ENCODE measurements at regions of chr2 and their contacts with region 1.

Region 1: DNA sequence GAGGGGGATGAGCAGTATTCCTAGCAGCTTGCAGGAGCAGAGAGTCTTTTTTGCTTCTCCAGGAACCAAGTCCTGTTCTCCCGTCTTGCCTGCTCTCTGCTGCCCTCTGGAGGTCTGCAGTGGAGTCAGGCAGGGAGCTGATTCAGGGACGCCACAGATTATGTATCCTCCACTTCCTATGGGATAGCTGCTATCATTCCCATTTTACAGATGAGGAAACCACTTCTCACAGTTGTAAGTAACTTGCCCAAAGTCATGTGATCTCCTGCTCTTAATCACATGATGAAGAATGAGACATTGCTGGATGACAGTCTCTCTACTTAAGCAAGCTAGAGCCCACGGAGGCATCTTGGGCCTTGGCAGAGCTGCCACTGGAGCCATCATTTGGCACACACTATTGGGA is 8.3 kb downstream of the SLC4A5 start:
- DNase-seq: peak; percentile 70 to 82 (median 76)
- ATAC-seq: peak; percentile 59 to 86 (median 74)
- H3K4me3 ChIP-seq: no peak overlapping the region
- H3K27ac ChIP-seq: no peak overlapping the region
- H3K4me1 ChIP-seq: no peaks in the 10 kb centered on the region
- H3K27me3 ChIP-seq: no peaks in the 10 kb centered on the region
- CTCF ChIP-seq: peak; percentile 89 to 98 (median 95)
- POLR2A ChIP-seq: no peak

Region 2: DNA sequence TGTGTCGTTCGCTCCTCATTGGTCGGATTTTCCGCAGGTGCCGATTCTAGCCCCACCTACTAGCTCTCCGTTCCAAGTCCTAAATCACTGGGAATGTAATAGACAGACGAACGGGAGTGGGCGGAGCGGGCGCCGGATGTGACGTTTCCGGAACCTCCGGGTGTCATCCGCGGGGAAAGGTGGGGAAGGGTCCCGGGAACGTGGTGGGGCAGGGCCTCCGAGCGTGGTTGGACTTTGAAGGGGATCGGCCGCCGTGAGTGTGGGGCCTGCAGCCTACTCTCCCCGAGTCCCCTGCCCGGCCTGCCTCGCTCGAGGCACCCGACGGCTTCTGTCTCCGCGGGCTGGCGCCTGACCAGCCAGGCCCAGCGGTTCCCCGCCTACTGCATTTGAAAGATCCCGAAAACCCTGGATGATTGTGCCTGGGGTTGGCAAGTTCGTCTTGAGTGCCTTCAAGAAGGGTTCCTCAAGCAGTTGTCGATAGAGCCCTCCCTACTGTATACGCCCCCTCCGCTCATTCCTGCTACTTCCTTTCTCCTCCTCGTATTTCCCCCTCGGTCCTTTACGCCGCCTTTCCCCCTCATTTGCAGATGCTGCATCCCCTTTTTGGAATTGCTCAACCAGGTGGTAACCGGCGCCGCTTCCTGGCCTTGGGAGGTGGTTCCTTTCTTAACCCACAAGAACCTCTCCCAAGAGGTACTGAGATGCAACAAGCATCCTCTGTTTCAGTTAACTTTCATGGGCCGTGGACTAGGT is 505.9 kb before region 1 on chr2 and contains the start of gene STAMBP:
- intact Hi-C with region 1: loop called in 4 of 10 experiments (anchors 10 kb)
- DNase-seq: peak; percentile 97
- ATAC-seq: peak; percentile 98 to 99 (median 98)
- H3K4me3 ChIP-seq: peak within 1 kb of the TSS; percentile 68 to 97 (median 86)
- H3K27ac ChIP-seq: peak within 1 kb of the TSS; percentile 88 to 99 (median 95)
- H3K4me1 ChIP-seq: peaks cover 0 to 40% (median 17%) of the 10 kb centered on the region in 12 donors
- H3K27me3 ChIP-seq: no peaks in the 10 kb centered on the region
- CTCF ChIP-seq: no peak
- POLR2A ChIP-seq: peak; percentile 52 to 75
- total RNA-seq, gene STAMBP: 27.2 to 38.0 (median 34.4) TPM

Region 3: DNA sequence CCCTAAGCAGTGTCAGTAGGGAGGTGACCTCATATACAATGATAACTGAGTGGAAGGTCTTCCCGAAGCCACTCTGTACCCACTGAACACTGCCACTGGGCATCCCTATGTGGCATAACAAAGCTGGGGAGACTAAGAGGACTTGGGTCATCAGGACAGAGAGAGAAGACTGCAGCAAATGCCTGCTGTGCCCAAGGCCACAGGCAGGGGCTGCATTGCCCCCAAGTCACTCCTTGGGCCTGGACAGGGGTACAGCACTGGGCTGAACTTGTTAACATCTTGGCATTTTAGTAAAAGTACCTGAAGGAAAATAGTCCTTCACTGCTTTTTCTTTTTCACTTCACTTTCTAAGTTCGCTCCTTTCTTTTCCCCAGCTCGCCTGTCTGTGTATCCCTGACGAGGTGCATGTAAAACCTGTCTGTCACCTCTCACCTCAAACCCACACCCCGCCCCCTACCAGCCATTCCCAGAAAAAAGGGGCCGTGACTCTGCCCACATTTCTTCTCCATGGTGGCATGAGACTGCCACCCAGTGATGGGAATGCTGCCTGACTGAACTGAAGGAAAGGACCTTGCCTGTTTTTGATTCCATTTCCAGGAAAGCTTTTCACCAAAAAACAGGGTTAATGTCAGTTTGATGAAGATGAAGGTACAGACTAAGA is 73.6 kb before region 1 on chr2:
- intact Hi-C with region 1: loop called in 5 of 10 experiments (anchors 2 to 10 kb)
- DNase-seq: peak in 4 of 5 donors; percentile 34 to 53 (median 40)
- ATAC-seq: peak; percentile 43 to 80 (median 68)
- H3K4me3 ChIP-seq: no peak overlapping the region
- H3K27ac ChIP-seq: peak overlapping the region in 1 of 12 donors; percentile 27
- H3K4me1 ChIP-seq: peaks cover 0 to 3% (median 0%) of the 10 kb centered on the region in 12 donors
- H3K27me3 ChIP-seq: no peaks in the 10 kb centered on the region
- CTCF ChIP-seq: peak; percentile 29 to 71 (median 49)
- POLR2A ChIP-seq: no peak

Region 4: DNA sequence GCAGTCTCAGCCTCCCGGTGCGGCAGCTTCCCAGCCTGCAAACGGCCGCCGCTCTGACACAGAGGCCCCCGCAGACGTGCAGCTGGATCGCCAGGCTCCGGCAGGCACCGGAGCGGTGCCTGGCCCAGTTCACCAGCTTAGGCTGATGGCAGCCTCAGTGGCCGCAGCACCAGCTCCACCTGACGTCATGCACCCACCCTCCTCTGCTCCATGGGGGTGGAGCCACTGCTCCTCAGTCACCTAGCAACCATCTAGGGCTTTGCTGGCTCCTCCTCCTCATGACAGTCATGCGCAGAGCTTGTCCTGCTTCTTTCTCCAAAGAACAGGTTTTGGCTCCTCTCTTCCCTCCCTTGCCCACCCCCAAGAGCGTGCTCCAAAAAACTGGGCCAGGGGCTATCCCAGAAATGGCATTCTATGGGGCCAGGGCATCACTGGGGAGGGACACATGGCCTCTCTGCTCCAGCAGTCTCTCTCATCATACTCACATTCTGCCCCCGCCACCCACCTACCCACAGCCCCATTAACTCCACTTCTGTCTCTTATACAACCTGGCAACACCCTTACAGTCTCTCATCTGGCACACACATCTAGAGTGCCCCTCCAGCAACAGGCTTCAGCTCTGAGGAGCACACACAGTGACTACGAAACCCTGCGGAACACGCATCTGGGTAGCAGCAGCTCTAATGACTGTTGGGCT is 39.7 kb after region 1 on chr2:
- intact Hi-C with region 1: no loop called
- DNase-seq: peak; percentile 76 to 86 (median 81)
- ATAC-seq: peak; percentile 92 to 96 (median 94)
- H3K4me3 ChIP-seq: peak overlapping the region in 11 of 12 donors; percentile 14 to 56 (median 46)
- H3K27ac ChIP-seq: peak overlapping the region in 9 of 12 donors; percentile 12 to 74 (median 48)
- H3K4me1 ChIP-seq: peaks cover 4 to 57% (median 40%) of the 10 kb centered on the region in 12 donors
- H3K27me3 ChIP-seq: no peaks in the 10 kb centered on the region
- CTCF ChIP-seq: no peak
- POLR2A ChIP-seq: no peak

Region 5: DNA sequence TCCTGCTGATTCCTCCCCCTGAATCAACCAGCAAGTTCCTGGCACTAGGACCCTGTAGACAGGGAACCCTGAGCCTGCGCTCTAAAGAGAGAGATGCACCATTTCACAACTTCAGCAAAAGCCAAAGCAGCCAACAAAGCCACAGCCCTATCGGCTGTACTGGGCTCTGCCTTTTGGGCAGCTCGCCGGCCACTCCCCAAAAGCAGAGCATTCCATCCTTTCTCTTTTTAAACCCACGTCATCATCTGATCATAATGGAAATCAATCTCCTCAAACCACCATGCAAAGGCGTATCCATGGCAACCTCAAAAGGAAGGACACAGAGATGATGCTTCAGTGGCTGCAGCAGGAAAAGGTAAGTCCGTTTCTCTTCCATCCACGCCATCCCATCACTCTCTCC is 50.5 kb after region 1 on chr2:
- intact Hi-C with region 1: loop called in 5 of 10 experiments (anchors 5 kb)
- DNase-seq: no peak
- ATAC-seq: peak in 1 of 4 donors; percentile 42
- H3K4me3 ChIP-seq: no peak overlapping the region
- H3K27ac ChIP-seq: peak overlapping the region in 1 of 12 donors; percentile 33
- H3K4me1 ChIP-seq: peaks cover 2 to 100% (median 79%) of the 10 kb centered on the region in 12 donors
- H3K27me3 ChIP-seq: no peaks in the 10 kb centered on the region
- CTCF ChIP-seq: no peak
- POLR2A ChIP-seq: no peak

Region 6: GRCh38 chr2:74399785-74400184 is 64.9 kb after region 1 on chr2:
- intact Hi-C with region 1: loop called in 6 of 10 experiments (anchors 5 kb)
- DNase-seq: no peak
- ATAC-seq: peak in 1 of 4 donors; percentile 28
- H3K4me3 ChIP-seq: no peak overlapping the region
- H3K27ac ChIP-seq: no peak overlapping the region
- H3K4me1 ChIP-seq: no peaks in the 10 kb centered on the region
- H3K27me3 ChIP-seq: no peaks in the 10 kb centered on the region
- CTCF ChIP-seq: peak in 10 of 12 donors; percentile 28 to 58 (median 47)
- POLR2A ChIP-seq: no peak